A549 (cell line): ENCODE measurements at regions of chr13 and their contacts with region 1.

Region 1: DNA sequence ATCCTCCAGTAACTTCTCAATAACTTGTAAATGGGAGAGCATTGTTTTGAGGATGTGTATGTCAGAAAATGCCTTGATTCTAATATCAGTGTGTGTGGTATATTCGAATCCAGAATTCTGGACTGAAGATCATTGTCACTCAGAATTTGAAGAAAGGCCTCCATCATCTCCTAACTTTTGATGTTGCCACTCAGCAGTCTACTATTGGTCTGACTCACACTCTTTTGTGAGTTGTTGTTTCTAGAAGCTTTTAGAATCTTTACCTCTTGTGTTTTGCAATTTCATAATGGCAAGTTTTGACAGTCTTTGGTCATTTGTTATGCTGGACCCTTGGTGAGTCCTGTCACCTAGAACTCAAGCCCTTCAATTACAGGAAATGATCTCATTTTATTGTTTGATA is 77.0 kb downstream of the RUBCNL start:
- DNase-seq: no peak
- ATAC-seq: no peak
- H3K4me3 ChIP-seq: no peak overlapping the region
- H3K27ac ChIP-seq: no peak overlapping the region
- H3K4me1 ChIP-seq: no peaks in the 10 kb centered on the region
- CTCF ChIP-seq: no peak
- EP300 ChIP-seq: no peak
- POLR2A ChIP-seq: no peak
- RAD21 ChIP-seq: no peak

Region 2: GRCh38 chr13:46321494-46322225 is 11.6 kb after region 1 on chr13:
- CTCF ChIA-PET with region 1: interaction called, 11 read pairs
- POLR2A ChIA-PET with region 1: no interaction called
- DNase-seq: peak; percentile 26 to 38
- ATAC-seq: peak; percentile 68 to 80
- H3K4me3 ChIP-seq: no peak overlapping the region
- H3K27ac ChIP-seq: no peak overlapping the region
- H3K4me1 ChIP-seq: no peaks in the 10 kb centered on the region
- CTCF ChIP-seq: peak; percentile 65
- EP300 ChIP-seq: no peak
- POLR2A ChIP-seq: no peak
- RAD21 ChIP-seq: peak; percentile 68 to 71